ENCODE measurements at regions of chr4 and their contacts with region 1.

Region 1: GRCh38 chr4:130812117-130812765 is 1716.3 kb downstream of the C4orf33 start:
- DNase-seq: no peak
- ATAC-seq: no peak
- H3K4me3 ChIP-seq: no peak overlapping the region
- H3K27ac ChIP-seq: no peak overlapping the region
- H3K4me1 ChIP-seq: no peaks in the 10 kb centered on the region
- H3K27me3 ChIP-seq: no peaks in the 10 kb centered on the region
- CTCF ChIP-seq: no peak
- POLR2A ChIP-seq: no peak
- RAD21 ChIP-seq: no peak

Region 2: GRCh38 chr4:130955520-130955919 is 143.3 kb after region 1 on chr4:
- CTCF ChIA-PET with region 1: no interaction called
- POLR2A ChIA-PET with region 1: no interaction called
- dilution Hi-C with region 1: no loop called
- in situ Hi-C with region 1: no loop called
- intact Hi-C with region 1: loop called (anchors 10 kb)
- DNase-seq: no peak
- ATAC-seq: no peak
- H3K4me3 ChIP-seq: no peak overlapping the region
- H3K27ac ChIP-seq: no peak overlapping the region
- H3K4me1 ChIP-seq: no peaks in the 10 kb centered on the region
- H3K27me3 ChIP-seq: no peaks in the 10 kb centered on the region
- CTCF ChIP-seq: no peak
- POLR2A ChIP-seq: no peak
- RAD21 ChIP-seq: no peak